ENCODE measurements at regions of chr14 and their contacts with region 1.

Region 1: GRCh38 chr14:24241829-24242443 is 487 bp downstream of the TINF2 start:
- DNase-seq: peak; percentile 96 to 99
- H3K4me3 ChIP-seq: peak overlapping the region; percentile 51
- H3K4me1 ChIP-seq: peaks cover 9% of the 10 kb centered on the region
- H3K27me3 ChIP-seq: no peaks in the 10 kb centered on the region

Region 2: GRCh38 chr14:23793532-23793931 is 448.4 kb before region 1 on chr14:
- in situ Hi-C with region 1: no loop called
- DNase-seq: no peak
- H3K4me3 ChIP-seq: no peak overlapping the region
- H3K4me1 ChIP-seq: no peaks in the 10 kb centered on the region
- H3K27me3 ChIP-seq: peaks cover 3% of the 10 kb centered on the region

Region 3: GRCh38 chr14:24299255-24300195 is 57.6 kb after region 1 on chr14 and contains the starts of genes DHRS1 and NOP9:
- in situ Hi-C with region 1: loop called (anchors 5 kb)
- DNase-seq: peak; percentile 70 to 93
- H3K4me3 ChIP-seq: peak within 1 kb of the TSS; percentile 76
- H3K4me1 ChIP-seq: peaks cover 12% of the 10 kb centered on the region
- H3K27me3 ChIP-seq: no peaks in the 10 kb centered on the region

Region 4: DNA sequence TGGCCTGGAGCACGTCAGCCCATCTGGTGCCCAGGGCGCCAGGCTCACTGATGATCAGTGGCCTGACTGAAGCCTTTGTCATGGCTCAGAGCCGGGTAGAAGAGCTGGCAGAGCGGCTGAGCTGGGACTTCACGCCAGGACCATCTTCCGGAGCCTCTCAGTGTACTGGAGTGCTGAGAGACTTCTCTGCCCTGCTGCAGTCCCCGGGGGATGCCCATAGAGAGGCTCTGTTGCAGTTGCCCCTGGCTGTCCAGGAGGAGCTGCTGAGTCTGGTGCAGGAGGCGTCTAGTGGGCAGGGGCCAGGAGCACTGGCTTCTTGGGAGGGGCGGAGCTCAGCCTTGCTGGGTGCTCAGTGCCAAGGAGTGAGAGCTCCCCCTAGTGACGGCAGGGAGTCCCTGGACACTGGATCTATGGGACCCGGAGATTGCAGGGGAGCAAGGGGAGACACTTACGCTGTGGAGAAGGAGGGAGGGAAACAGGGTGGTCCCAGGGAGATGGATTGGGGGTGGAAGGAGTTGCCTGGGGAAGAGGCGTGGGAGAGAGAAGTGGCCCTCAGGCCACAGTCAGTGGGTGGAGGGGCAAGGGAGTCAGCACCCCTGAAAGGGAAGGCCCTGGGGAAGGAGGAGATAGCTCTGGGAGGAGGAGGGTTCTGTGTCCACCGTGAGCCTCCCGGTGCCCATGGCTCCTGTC is 189.8 kb after region 1 on chr14:
- in situ Hi-C with region 1: loop called (anchors 5 kb)
- DNase-seq: peak; percentile 92 to 97
- H3K4me3 ChIP-seq: no peak overlapping the region; the same call in 1 of the 2 replicates
- H3K4me1 ChIP-seq: peaks cover 13% of the 10 kb centered on the region
- H3K27me3 ChIP-seq: no peaks in the 10 kb centered on the region

Measured in HAP-1 (cell line).